Mucosa of descending colon (tissue), 3 donors: ENCODE measurements at regions of chr2 and their contacts with region 1.

Region 1: GRCh38 chr2:217798743-217799562 is 203.8 kb downstream of the TNS1 start:
- DNase-seq: peak in 1 of 3 donors; percentile 30
- ATAC-seq: peak; percentile 44
- H3K4me3 ChIP-seq: no peak overlapping the region
- H3K4me1 ChIP-seq: no peaks in the 10 kb centered on the region
- CTCF ChIP-seq: no peak

Region 2: GRCh38 chr2:217743966-217744761 is 54.8 kb before region 1 on chr2:
- intact Hi-C with region 1: no loop called
- DNase-seq: no peak
- ATAC-seq: no peak
- H3K4me3 ChIP-seq: no peak overlapping the region
- H3K4me1 ChIP-seq: no peaks in the 10 kb centered on the region
- CTCF ChIP-seq: no peak

Region 3: DNA sequence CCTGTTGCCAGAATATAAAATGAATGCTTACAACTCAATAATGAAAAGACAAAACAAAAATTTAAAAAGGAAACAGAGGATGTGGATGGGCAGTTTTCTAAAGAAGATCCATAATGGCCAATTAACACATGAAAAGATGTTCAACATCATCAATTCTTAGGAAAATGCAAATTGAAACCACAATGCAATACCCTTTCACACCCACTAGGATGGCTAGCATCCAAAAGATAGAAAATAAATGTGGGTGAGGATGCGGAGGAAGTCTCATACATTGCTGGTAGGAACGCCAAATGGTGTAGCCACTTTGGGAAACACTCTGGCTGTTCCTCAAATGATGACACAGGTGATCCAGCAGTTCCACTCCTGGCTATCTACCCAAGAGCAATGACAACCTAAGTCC is 73.4 kb after region 1 on chr2:
- intact Hi-C with region 1: loop called in 1 of 2 experiments (anchors 10 kb)
- DNase-seq: no peak
- ATAC-seq: no peak
- H3K4me3 ChIP-seq: no peak overlapping the region
- H3K4me1 ChIP-seq: no peaks in the 10 kb centered on the region
- CTCF ChIP-seq: no peak

Region 4: GRCh38 chr2:217918308-217919024 is 119.5 kb after region 1 on chr2:
- intact Hi-C with region 1: no loop called
- DNase-seq: peak in 1 of 3 donors; percentile 53
- ATAC-seq: peak; percentile 5
- H3K4me3 ChIP-seq: no peak overlapping the region
- H3K4me1 ChIP-seq: peaks cover 9% of the 10 kb centered on the region
- CTCF ChIP-seq: no peak